Endothelial cell of umbilical vein (primary cell): ENCODE measurements at regions of chr7 and their contacts with region 1.

Region 1: GRCh38 chr7:100088621-100089457 is at the start of gene COPS6:
- DNase-seq: peak; percentile 65
- H3K4me3 ChIP-seq: peak within 1 kb of the TSS; percentile 62 to 74 (median 68)
- H3K27ac ChIP-seq: peak within 1 kb of the TSS; percentile 94
- H3K4me1 ChIP-seq: peaks cover 39% of the 10 kb centered on the region
- H3K27me3 ChIP-seq: no peaks in the 10 kb centered on the region
- CTCF ChIP-seq: no peak
- POLR2A ChIP-seq: peak; percentile 84
- total RNA-seq, gene COPS6: 168 and 188 TPM in 2 replicates

Region 2: DNA sequence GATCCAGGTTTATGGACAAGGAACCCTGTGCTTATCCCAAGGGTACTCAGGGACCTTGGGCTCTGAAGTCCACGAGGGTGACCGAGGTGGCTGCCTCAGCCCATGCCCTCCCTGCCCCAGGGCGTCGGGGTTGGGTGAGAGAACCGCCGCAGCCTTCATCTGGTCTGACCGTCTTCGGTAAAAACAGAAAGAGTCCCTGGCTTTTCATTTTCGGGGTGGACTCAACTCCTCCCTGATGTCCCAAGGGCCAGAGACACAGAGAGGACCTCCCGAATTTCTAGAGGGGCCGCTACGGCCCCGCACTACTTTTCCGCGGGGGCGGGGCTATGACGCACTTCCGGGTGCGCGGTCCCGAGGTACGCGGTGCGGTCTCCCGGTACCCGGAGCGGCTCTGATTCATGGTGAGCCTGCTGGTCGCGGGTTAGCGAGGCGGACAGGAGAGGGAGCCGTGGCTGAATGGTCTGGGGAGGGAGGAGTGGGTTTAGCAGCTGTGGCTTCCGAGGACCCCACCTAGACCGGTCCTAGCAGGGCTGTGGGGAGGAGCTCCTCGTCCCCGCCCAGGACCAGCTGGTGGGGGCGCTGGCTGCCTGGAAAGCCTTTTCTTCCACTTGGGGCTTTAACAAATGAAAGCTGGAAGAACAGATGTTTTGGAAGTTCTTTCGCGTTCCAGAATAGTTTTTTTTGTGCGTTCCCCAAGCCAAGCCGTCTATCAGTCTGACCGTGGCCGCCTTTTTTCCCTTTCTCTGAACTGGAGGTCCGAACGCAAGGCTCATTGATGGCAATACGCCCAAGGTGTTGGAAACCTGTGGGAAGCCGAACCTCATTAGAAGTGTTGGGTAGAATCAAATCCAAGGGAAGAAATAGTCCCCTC is 39.2 kb before region 1 on chr7 and contains the start of gene ZSCAN21:
- CTCF ChIA-PET with region 1: no interaction called
- POLR2A ChIA-PET with region 1: no interaction called
- dilution Hi-C with region 1: no loop called
- intact Hi-C with region 1: no loop called
- DNase-seq: peak; percentile 81
- H3K4me3 ChIP-seq: peak within 1 kb of the TSS; percentile 75 to 87 (median 86)
- H3K27ac ChIP-seq: peak within 1 kb of the TSS; percentile 70
- H3K4me1 ChIP-seq: peaks cover 3% of the 10 kb centered on the region
- H3K27me3 ChIP-seq: no peaks in the 10 kb centered on the region
- CTCF ChIP-seq: peak in 1 of 2 donors; percentile 9
- POLR2A ChIP-seq: peak; percentile 85
- total RNA-seq, gene ZSCAN21: 7.4 and 7.7 TPM in 2 replicates

Region 3: DNA sequence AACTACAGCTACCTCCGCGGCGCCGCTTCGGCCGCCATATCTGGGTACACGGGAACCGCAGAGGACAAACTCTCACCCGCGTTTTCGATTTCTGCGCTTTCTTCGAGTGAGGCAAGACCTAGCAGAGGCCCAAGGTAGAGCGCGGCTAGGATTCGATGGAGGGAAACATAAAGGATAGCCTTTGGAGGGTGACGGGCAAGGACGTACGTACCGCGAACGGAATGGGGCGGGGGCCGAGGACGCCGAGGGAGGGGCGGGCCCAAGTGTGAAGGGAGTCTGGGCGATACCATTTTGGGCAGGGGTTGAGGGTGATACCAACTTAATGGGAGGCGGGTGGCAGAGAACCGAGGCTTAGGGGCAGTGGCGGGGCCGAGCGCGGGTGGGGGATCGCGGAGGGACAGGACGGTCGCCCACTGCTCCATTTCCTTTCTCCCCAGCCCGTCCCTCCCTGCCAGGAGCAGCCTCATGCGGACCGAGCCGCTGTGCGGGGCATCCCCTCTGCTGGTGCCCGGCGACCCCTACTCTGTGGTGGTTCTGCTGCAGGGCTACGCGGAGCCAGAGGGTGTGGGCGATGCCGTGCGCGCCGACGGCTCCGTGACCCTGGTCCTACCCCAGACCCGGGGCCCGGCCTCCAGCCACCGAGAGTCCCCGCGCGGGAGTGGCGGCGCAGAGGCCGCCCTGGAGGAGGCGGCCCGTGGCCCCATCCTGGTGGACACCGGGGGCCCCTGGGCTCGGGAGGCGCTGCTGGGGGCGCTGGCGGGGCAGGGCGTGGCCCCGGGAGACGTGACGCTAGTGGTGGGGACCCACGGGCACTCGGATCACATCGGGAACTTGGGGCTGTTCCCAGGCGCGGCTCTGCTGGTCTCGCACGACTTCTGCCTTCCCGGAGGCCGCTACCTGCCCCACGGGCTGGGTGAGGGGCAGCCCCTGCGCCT is 38.4 kb after region 1 on chr7 and contains the start of gene MBLAC1:
- CTCF ChIA-PET with region 1: interaction called, 3 read pairs
- POLR2A ChIA-PET with region 1: no interaction called
- dilution Hi-C with region 1: no loop called
- intact Hi-C with region 1: loop called (anchors 2 kb)
- DNase-seq: peak; percentile 88
- H3K4me3 ChIP-seq: peak within 1 kb of the TSS; percentile 86 to 96 (median 93)
- H3K27ac ChIP-seq: peak within 1 kb of the TSS; percentile 94
- H3K4me1 ChIP-seq: peaks cover 11% of the 10 kb centered on the region
- H3K27me3 ChIP-seq: no peaks in the 10 kb centered on the region
- CTCF ChIP-seq: no peak
- POLR2A ChIP-seq: peak; percentile 92
- total RNA-seq, gene MBLAC1: 1.3 and 1.8 TPM in 2 replicates

Region 4: GRCh38 chr7:100444311-100445278 is 355.8 kb after region 1 on chr7:
- CTCF ChIA-PET with region 1: no interaction called
- POLR2A ChIA-PET with region 1: no interaction called
- dilution Hi-C with region 1: no loop called
- intact Hi-C with region 1: no loop called
- DNase-seq: peak; percentile 96
- H3K4me3 ChIP-seq: no peak overlapping the region
- H3K27ac ChIP-seq: peak overlapping the region; percentile 85
- H3K4me1 ChIP-seq: peaks cover 35% of the 10 kb centered on the region
- H3K27me3 ChIP-seq: no peaks in the 10 kb centered on the region
- CTCF ChIP-seq: no peak
- POLR2A ChIP-seq: peak; percentile 86